Activated T-helper 2 cell treated with anti-CD3 and anti-CD28 coated beads, Interferon-gamma antibody, Interleukin-2, Interleukin-4, amounts not matched to agents 10 μg/mL and 5 μg/mL and 100 μg/mL, durations not matched to agents 14 hours and 24 hours and 36 hours (primary cell): ENCODE measurements at regions of chr2 and their contacts with region 1.

Region 1: GRCh38 chr2:42828487-42829425 is 36.4 kb upstream of the HAAO start:
- DNase-seq: peak; percentile 56
- H3K4me3 Mint-ChIP-seq: no peak overlapping the region
- H3K27ac Mint-ChIP-seq: no peak overlapping the region
- H3K4me1 Mint-ChIP-seq: peaks cover 18% of the 10 kb centered on the region
- H3K27me3 Mint-ChIP-seq: peaks cover 7% of the 10 kb centered on the region

Region 2: DNA sequence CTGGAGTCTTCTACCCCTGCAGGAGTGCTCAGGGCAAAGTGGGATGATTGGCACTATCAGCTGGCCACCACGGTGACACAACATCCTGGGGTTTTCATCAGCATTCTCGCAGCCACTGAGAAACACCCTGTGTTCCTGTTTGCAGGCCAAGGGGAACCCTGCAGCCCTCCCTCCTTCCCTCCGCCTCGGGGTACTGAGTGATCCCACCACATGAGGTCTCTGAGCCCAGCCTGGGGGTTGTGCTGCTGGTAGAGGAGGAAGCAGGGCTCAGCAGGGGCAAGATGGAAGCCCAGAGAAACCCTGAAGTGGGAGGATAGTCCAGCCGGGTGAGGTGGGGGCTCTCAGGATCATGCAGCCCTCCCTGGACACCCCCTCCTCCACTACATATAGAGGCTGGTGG is 64.7 kb before region 1 on chr2 and contains the start of gene OXER1:
- intact Hi-C with region 1: no loop called
- DNase-seq: no peak
- H3K4me3 Mint-ChIP-seq: no peak within 1 kb of the TSS
- H3K27ac Mint-ChIP-seq: no peak within 1 kb of the TSS
- H3K4me1 Mint-ChIP-seq: no peaks in the 10 kb centered on the region
- H3K27me3 Mint-ChIP-seq: no peaks in the 10 kb centered on the region
- total RNA-seq, gene OXER1: 1.1 and 1.3 TPM in 2 replicates

Region 3: DNA sequence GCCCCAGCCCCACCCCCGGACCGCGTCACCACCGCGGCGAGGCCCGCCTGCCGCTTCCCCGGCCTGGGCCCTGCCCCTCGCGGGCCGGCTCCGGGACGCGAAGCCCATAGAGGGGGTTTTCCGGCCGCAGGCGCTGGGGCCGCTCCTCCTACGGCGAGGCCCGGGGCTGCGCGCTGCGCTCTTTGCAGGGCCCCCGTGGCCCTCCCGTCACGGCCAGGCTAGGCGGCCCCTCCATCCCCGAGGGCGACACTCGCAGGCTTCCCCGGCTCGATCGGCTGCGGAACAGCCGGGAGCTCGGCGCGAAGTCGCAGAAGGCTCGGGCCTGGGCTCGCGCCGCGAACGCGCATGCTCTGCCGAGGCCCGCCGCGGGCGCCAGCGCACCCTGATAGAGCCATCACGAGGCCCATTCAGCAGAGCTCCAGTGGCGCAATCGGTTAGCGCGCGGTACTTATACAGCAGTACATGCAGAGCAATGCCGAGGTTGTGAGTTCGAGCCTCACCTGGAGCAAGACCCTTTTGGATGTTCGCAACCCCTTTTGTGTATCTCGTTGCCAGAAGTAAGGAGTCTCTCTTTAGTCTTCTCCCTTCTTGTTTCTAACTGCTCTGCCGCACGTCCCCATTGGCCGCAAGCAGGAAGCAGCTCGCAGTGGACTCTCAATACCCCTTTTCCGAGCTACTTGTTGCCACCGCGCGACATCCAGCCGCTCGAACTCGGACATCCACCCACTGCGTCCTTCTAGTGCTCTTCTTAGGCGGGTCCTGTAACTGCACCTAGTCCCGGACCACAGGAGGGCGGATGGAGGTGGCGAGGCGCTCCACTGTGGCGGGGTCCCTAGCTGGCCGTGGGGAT is 18.4 kb before region 1 on chr2:
- intact Hi-C with region 1: loop called (anchors 2 kb)
- DNase-seq: peak; percentile 94
- H3K4me3 Mint-ChIP-seq: peak overlapping the region; percentile 95
- H3K27ac Mint-ChIP-seq: peak overlapping the region; percentile 100
- H3K4me1 Mint-ChIP-seq: peaks cover 21% of the 10 kb centered on the region
- H3K27me3 Mint-ChIP-seq: no peaks in the 10 kb centered on the region

Region 4: DNA sequence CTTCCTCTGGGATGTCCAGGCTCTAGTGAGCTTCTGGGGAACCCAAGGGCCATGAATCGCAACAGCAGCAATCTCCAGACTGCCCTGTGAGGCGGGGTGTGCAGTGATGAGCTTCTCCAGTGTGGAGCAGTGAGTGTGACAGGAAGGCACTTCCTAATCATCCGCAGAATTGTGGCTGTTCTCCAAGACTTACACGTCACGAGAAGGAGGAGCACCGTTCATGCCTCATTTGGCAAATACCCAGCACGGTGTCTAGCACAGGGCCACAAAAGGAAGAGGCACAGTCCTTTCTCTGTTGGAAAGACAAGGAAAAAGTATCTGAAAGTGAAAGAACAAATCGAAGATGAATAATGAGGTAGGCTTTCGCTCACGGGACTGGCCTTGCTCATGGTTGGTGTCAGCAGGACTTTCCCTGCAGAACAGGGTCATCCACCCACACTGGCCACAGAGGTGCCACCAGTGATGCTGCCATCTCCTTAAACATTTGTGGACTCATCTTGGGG is 88.7 kb after region 1 on chr2:
- intact Hi-C with region 1: loop called (anchors 5 kb)
- DNase-seq: no peak
- H3K4me3 Mint-ChIP-seq: no peak overlapping the region
- H3K27ac Mint-ChIP-seq: no peak overlapping the region
- H3K4me1 Mint-ChIP-seq: peaks cover 6% of the 10 kb centered on the region
- H3K27me3 Mint-ChIP-seq: peaks cover 1% of the 10 kb centered on the region

Region 5: GRCh38 chr2:42944779-42945415 is 116.1 kb after region 1 on chr2:
- intact Hi-C with region 1: loop called (anchors 10 kb)
- DNase-seq: no peak
- H3K4me3 Mint-ChIP-seq: no peak overlapping the region
- H3K27ac Mint-ChIP-seq: no peak overlapping the region
- H3K4me1 Mint-ChIP-seq: peaks cover 3% of the 10 kb centered on the region
- H3K27me3 Mint-ChIP-seq: peaks cover 2% of the 10 kb centered on the region

Region 6: GRCh38 chr2:43024515-43025011 is 195.8 kb after region 1 on chr2:
- intact Hi-C with region 1: no loop called
- DNase-seq: no peak
- H3K4me3 Mint-ChIP-seq: no peak overlapping the region
- H3K27ac Mint-ChIP-seq: no peak overlapping the region
- H3K4me1 Mint-ChIP-seq: peaks cover 3% of the 10 kb centered on the region
- H3K27me3 Mint-ChIP-seq: peaks cover 4% of the 10 kb centered on the region

Region 7: DNA sequence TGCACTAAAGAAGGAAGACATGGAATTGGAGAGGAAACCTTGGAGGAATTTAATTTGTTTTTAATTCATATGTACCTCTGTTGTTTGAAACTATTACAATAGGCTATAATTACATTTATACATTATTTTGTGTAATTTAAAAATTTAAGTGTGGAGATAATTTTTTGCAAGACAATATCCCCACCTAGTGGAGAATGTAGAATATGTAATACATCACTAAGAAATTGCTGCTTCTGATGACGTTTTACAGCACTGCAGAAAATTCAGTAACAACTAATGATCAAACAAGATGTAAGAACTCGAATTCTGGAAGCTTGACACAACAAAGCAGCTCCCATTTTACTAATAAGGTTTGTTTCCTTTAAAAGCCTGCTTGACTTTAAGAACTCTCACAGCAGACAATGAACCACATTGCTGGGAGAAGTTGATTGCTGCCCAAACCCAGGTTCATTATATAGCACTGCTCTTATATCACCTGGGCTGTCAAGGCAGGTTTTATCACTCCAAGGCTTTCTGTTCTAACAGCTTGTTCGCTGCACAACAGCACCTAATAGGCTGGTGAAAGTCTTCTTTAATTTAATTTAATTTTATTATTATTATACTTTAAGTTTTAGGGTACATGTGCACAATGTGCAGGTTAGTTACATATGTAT is 713.7 kb after region 1 on chr2:
- intact Hi-C with region 1: loop called (anchors 1 kb)
- DNase-seq: no peak
- H3K4me3 Mint-ChIP-seq: no peak overlapping the region
- H3K27ac Mint-ChIP-seq: no peak overlapping the region
- H3K4me1 Mint-ChIP-seq: peaks cover 19% of the 10 kb centered on the region
- H3K27me3 Mint-ChIP-seq: no peaks in the 10 kb centered on the region

Region 8: GRCh38 chr2:43611987-43612894 is 783.5 kb after region 1 on chr2:
- intact Hi-C with region 1: loop called (anchors 5 kb)
- DNase-seq: peak; percentile 61
- H3K4me3 Mint-ChIP-seq: no peak overlapping the region
- H3K27ac Mint-ChIP-seq: no peak overlapping the region
- H3K4me1 Mint-ChIP-seq: peaks cover 9% of the 10 kb centered on the region
- H3K27me3 Mint-ChIP-seq: peaks cover 4% of the 10 kb centered on the region